B cell (primary cell): ENCODE measurements at regions of chr12 and their contacts with region 1.

Region 1: GRCh38 chr12:51341259-51342007 is 5.0 kb downstream of the CELA1 start:
- DNase-seq: peak; percentile 85
- ATAC-seq: peak; percentile 86
- H3K4me3 ChIP-seq: no peak overlapping the region
- H3K4me3 Mint-ChIP-seq: peak overlapping the region; percentile 42
- H3K27ac ChIP-seq: no peak overlapping the region
- H3K27ac Mint-ChIP-seq: peak overlapping the region; percentile 43
- H3K4me1 ChIP-seq: peaks cover 42 to 45% of the 10 kb centered on the region in 2 donors
- H3K4me1 Mint-ChIP-seq: peaks cover 43% of the 10 kb centered on the region
- H3K27me3 ChIP-seq: no peaks in the 10 kb centered on the region
- H3K27me3 Mint-ChIP-seq: no peaks in the 10 kb centered on the region
- CTCF ChIP-seq: peak; percentile 99

Region 2: GRCh38 chr12:50763639-50764285 is 577.7 kb before region 1 on chr12 and contains the start of gene ATF1:
- CTCF ChIA-PET with region 1: interaction called, 10 read pairs
- POLR2A ChIA-PET with region 1: no interaction called
- intact Hi-C with region 1: no loop called
- DNase-seq: peak; percentile 95
- ATAC-seq: peak; percentile 80
- H3K4me3 ChIP-seq: peak within 1 kb of the TSS; percentile 92 to 98 (median 96)
- H3K4me3 Mint-ChIP-seq: peak within 1 kb of the TSS; percentile 91
- H3K27ac ChIP-seq: peak within 1 kb of the TSS; percentile 95
- H3K27ac Mint-ChIP-seq: peak within 1 kb of the TSS; percentile 99
- H3K4me1 ChIP-seq: peaks cover 10 to 33% of the 10 kb centered on the region in 2 donors
- H3K4me1 Mint-ChIP-seq: peaks cover 33% of the 10 kb centered on the region
- H3K27me3 ChIP-seq: no peaks in the 10 kb centered on the region
- H3K27me3 Mint-ChIP-seq: no peaks in the 10 kb centered on the region
- CTCF ChIP-seq: no peak
- total RNA-seq, gene ATF1: 39.5 and 45.4 TPM in 2 replicates

Region 3: DNA sequence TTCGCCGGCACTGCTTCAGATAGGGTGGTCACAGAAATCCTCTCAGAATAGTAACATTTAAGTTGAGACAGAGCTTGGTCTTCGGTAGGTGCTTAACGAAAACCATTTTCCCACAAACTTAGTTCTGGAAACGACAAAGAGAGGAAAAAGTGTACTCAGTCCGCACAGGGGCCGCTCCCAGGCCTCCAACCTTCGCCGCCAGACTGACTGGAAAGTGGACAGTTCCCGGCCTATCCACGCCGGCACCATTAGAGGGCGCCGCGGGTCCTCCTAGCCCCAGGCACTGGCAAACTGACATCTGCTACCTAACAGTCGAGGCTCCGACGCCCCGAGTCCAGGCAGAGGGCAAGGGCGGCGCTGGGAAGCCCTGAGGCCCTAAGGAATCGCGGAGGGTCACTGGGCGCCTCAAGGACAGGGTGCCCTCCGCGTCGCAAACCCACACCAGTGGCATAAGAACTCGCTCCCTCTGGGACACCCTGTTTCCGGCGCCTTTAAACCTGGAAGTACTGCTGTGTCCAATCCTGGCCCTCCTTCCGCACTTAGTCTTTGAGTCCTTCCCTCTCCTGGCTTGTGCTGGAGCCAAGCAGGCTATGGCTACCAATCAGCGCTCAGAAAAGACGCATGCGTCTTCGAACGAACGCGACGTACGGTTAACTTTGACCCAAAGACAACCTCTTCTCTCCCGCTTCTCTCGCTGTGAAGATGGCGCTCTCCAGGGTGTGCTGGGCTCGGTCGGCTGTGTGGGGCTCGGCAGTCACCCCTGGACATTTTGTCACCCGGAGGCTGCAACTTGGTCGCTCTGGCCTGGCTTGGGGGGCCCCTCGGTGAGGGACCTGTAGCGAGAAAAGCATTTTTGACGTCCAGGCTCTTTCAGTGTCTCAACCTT is 293.5 kb before region 1 on chr12 and contains the start of gene LETMD1:
- CTCF ChIA-PET with region 1: interaction called, 11 read pairs
- POLR2A ChIA-PET with region 1: no interaction called
- intact Hi-C with region 1: loop called (anchors 1 kb)
- DNase-seq: peak; percentile 97
- ATAC-seq: peak; percentile 95
- H3K4me3 ChIP-seq: peak within 1 kb of the TSS; percentile 75 to 91 (median 79)
- H3K4me3 Mint-ChIP-seq: peak within 1 kb of the TSS; percentile 96
- H3K27ac ChIP-seq: peak within 1 kb of the TSS; percentile 81
- H3K27ac Mint-ChIP-seq: peak within 1 kb of the TSS; percentile 95
- H3K4me1 ChIP-seq: peaks cover 18 to 22% of the 10 kb centered on the region in 2 donors
- H3K4me1 Mint-ChIP-seq: peaks cover 29% of the 10 kb centered on the region
- H3K27me3 ChIP-seq: no peaks in the 10 kb centered on the region
- H3K27me3 Mint-ChIP-seq: no peaks in the 10 kb centered on the region
- CTCF ChIP-seq: peak; percentile 97
- total RNA-seq, gene LETMD1: 101 and 105 TPM in 2 replicates

Region 4: DNA sequence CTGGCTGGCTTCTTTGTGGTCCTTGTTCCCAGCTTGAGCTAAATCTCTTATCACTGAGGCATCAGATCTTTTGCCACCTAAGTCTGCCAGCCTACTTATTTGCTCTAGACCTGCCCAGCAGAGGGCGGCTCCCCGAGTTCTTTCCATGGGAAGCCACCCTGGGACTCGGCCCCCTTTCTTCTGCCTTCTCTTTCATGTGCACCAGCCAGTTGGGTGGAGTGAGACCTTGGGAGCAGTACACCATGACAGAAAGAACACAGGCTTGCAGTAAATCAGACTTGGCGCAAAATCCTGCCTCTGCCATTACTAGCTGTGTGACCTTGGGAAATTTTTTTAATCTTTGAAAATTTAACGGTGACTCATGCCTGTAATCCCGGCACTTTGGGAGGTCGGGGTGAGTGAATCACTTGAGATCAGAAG is 78.7 kb before region 1 on chr12:
- CTCF ChIA-PET with region 1: interaction called, 127 read pairs
- POLR2A ChIA-PET with region 1: no interaction called
- intact Hi-C with region 1: loop called (anchors 1 kb)
- DNase-seq: peak; percentile 58
- ATAC-seq: peak; percentile 45
- H3K4me3 ChIP-seq: no peak overlapping the region
- H3K4me3 Mint-ChIP-seq: no peak overlapping the region
- H3K27ac ChIP-seq: no peak overlapping the region
- H3K27ac Mint-ChIP-seq: no peak overlapping the region
- H3K4me1 ChIP-seq: peaks cover 0 to 5% of the 10 kb centered on the region in 2 donors
- H3K4me1 Mint-ChIP-seq: peaks cover 16% of the 10 kb centered on the region
- H3K27me3 ChIP-seq: no peaks in the 10 kb centered on the region
- H3K27me3 Mint-ChIP-seq: no peaks in the 10 kb centered on the region
- CTCF ChIP-seq: peak; percentile 41

Region 5: GRCh38 chr12:51307655-51308593 is 33.5 kb before region 1 on chr12:
- CTCF ChIA-PET with region 1: interaction called, 87 read pairs
- POLR2A ChIA-PET with region 1: no interaction called
- intact Hi-C with region 1: loop called (anchors 1 kb)
- DNase-seq: peak; percentile 29
- ATAC-seq: no peak
- H3K4me3 ChIP-seq: no peak overlapping the region
- H3K4me3 Mint-ChIP-seq: no peak overlapping the region
- H3K27ac ChIP-seq: no peak overlapping the region
- H3K27ac Mint-ChIP-seq: no peak overlapping the region
- H3K4me1 ChIP-seq: peaks cover 2 to 4% of the 10 kb centered on the region in 2 donors
- H3K4me1 Mint-ChIP-seq: peaks cover 25% of the 10 kb centered on the region
- H3K27me3 ChIP-seq: no peaks in the 10 kb centered on the region
- H3K27me3 Mint-ChIP-seq: no peaks in the 10 kb centered on the region
- CTCF ChIP-seq: no peak

Region 6: DNA sequence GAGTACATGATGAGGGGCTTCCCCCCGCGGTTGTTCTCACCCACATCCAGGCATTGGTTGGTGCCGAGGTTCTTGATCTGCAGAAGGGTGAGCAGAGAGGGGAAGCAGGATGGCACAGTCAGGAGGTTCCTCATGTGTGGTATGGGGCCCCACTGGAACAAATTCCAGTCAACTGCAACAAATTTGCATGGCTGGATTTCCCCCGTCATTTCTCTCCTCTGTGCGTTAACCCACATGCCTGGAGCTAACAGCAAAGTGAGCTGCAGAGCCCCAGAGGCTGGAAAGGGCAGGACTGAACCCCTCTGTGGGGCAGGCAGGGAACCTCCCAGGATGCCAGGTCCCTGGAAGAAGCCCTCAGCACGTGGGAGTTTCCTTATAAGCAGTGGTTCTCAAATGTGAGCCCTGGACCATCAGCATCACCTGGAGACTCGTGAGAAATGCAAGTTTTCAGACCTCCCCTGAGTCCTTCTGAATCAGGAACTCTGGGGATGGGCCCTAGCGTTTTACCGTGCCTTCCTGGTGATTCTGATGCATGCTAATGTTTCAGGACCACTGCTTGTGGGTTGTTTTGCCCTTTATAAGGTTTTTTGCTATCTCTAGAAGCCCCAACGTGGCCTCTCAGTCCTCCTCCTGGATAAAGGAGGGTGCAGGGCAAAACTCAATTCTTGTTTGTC is 16.1 kb after region 1 on chr12:
- CTCF ChIA-PET with region 1: interaction called, 23 read pairs
- POLR2A ChIA-PET with region 1: no interaction called
- intact Hi-C with region 1: no loop called
- DNase-seq: peak; percentile 88
- ATAC-seq: peak; percentile 83
- H3K4me3 ChIP-seq: peak overlapping the region in 2 of 5 experiments; percentile 4 to 6
- H3K4me3 Mint-ChIP-seq: peak overlapping the region; percentile 73
- H3K27ac ChIP-seq: peak overlapping the region in 1 of 2 donors; percentile 57
- H3K27ac Mint-ChIP-seq: peak overlapping the region; percentile 53
- H3K4me1 ChIP-seq: peaks cover 30 to 43% of the 10 kb centered on the region in 2 donors
- H3K4me1 Mint-ChIP-seq: peaks cover 39% of the 10 kb centered on the region
- H3K27me3 ChIP-seq: no peaks in the 10 kb centered on the region
- H3K27me3 Mint-ChIP-seq: no peaks in the 10 kb centered on the region
- CTCF ChIP-seq: no peak

Region 7: DNA sequence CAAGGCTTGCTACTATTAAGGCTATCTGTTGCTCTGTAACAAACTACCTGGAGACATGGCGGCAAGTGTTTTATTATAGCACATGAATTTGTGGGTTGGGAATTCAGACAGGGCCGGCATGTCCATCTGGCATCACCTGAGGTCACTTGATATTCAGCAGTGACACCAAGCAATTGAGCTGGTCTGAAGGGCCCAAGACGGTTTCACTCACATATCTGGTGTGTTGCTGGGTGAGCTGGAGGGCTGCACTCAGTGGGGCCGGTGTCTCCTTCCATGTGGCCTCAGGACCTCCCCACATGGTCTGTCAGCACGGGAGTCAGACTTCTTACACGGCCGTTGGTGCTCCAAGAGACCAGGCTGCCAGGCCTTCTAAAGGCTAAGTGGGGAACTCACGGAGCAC is 197.2 kb after region 1 on chr12:
- CTCF ChIA-PET with region 1: no interaction called
- POLR2A ChIA-PET with region 1: no interaction called
- intact Hi-C with region 1: no loop called
- DNase-seq: no peak
- ATAC-seq: no peak
- H3K4me3 ChIP-seq: no peak overlapping the region
- H3K4me3 Mint-ChIP-seq: no peak overlapping the region
- H3K27ac ChIP-seq: no peak overlapping the region
- H3K27ac Mint-ChIP-seq: no peak overlapping the region
- H3K4me1 ChIP-seq: no peaks in the 10 kb centered on the region
- H3K4me1 Mint-ChIP-seq: no peaks in the 10 kb centered on the region
- H3K27me3 ChIP-seq: peaks cover 0 to 10% (median 1%) of the 10 kb centered on the region in 4 experiments
- H3K27me3 Mint-ChIP-seq: peaks cover 24% of the 10 kb centered on the region
- CTCF ChIP-seq: no peak